ENCODE measurements at regions of chr19 and their contacts with region 1.

Region 1: DNA sequence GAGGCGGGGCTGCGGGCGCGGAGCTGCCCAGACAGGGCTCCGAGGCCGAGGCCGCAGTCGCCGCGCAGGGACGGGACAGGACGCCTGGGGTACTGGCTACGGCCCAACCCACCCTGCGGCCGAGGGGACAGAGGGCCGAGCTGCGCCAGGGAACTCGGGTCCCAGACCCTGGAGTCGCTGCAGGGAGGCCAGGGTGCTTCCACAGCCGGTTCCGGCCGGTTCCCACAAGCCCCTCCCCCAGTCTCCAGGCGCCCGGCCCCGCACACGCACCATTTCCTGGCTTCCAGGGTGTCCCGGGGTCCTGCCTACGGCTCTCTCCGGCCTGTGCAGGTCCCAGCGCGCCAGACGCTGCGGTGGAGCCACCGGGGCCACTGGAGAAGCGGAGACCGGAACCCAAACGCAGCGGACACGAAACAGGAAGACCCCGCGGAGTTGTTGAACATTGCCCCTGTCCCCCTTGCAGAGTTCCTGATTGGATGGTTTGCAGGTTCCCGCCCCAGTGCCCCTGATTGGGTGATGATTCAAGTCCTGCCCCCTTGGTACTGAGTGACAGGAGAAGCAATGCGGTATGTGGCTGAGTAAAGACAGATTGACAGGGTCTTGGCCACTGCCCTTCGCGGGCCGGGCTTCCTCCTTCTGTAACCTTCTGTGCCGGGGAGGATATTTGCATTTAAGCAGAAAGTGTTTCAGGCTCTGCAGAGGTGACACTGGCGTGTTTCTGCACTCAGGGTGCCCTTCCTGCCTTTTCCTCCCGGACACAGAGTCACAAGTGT is at the start of gene ZNF564:
- DNase-seq: peak; percentile 97
- H3K4me3 ChIP-seq: peak within 1 kb of the TSS; percentile 71 to 89
- H3K27ac ChIP-seq: peak within 1 kb of the TSS; percentile 91
- H3K4me1 ChIP-seq: peaks cover 0 to 7% of the 10 kb centered on the region in 2 experiments; a peak in 1 of 4 replicates
- H3K27me3 ChIP-seq: no peaks in the 10 kb centered on the region
- CTCF ChIP-seq: 0 out of 2 replicates have a peak, but pooled peaks have one; percentile 7
- EP300 ChIP-seq: no peak
- RAD21 ChIP-seq: no peak
- polyA plus RNA-seq, gene ZNF564: 1.3 TPM in 2 replicates

Region 2: GRCh38 chr19:12527034-12527836 is 24.0 kb before region 1 on chr19:
- CTCF ChIA-PET with region 1: no interaction called
- POLR2A ChIA-PET with region 1: no interaction called
- DNase-seq: no peak
- H3K4me3 ChIP-seq: peak overlapping the region in 1 of 2 experiments; percentile 7; a peak in 1 of 4 replicates
- H3K27ac ChIP-seq: no peak overlapping the region
- H3K4me1 ChIP-seq: no peaks in the 10 kb centered on the region
- H3K27me3 ChIP-seq: no peaks in the 10 kb centered on the region
- CTCF ChIP-seq: no peak
- EP300 ChIP-seq: no peak
- RAD21 ChIP-seq: no peak

Region 3: GRCh38 chr19:12564016-12564664 is 12.9 kb after region 1 on chr19:
- CTCF ChIA-PET with region 1: interaction called, 16 read pairs
- POLR2A ChIA-PET with region 1: no interaction called
- DNase-seq: peak; percentile 90
- H3K4me3 ChIP-seq: peak overlapping the region; percentile 9 to 36; a peak in 2 of 4 replicates
- H3K27ac ChIP-seq: no peak overlapping the region
- H3K4me1 ChIP-seq: peaks cover 0 to 3% of the 10 kb centered on the region in 2 experiments; a peak in 1 of 4 replicates
- H3K27me3 ChIP-seq: no peaks in the 10 kb centered on the region
- CTCF ChIP-seq: peak; percentile 96
- EP300 ChIP-seq: no peak
- RAD21 ChIP-seq: peak; percentile 90